Motor neuron (in vitro differentiated cells): ENCODE measurements at regions of chrX and their contacts with region 1.

Region 1: DNA sequence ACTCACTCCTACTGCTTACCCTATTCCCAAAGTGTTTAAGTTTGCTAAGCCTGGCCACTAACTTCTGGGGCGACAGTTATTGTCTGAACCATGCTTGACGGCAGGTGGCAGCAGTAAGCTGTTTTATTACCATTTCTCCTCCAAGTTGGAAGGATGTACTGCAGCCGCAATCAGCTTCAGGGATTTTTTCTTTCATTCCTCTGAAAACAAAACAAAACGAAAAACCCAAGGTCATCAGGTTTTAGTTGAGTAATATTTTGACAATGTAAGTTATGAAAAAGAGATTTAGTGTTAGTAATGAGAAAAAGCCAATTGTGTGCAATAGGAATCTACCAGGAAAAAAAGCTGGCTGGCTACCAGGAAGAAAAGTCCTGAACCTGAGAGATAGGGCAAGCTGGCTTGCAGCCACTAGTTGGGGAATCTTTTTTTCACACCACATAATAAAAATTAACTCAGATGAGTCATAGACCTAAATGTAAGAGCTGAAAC is 13.2 kb upstream of the RAB9B start:
- ATAC-seq: peak; percentile 52 to 84 (median 78)
- H3K4me3 ChIP-seq: peak overlapping the region in 2 of 5 donors; percentile 15 to 24
- H3K27ac ChIP-seq: no peak overlapping the region
- H3K4me1 ChIP-seq: peaks cover 0 to 2% of the 10 kb centered on the region in 2 donors

Region 2: DNA sequence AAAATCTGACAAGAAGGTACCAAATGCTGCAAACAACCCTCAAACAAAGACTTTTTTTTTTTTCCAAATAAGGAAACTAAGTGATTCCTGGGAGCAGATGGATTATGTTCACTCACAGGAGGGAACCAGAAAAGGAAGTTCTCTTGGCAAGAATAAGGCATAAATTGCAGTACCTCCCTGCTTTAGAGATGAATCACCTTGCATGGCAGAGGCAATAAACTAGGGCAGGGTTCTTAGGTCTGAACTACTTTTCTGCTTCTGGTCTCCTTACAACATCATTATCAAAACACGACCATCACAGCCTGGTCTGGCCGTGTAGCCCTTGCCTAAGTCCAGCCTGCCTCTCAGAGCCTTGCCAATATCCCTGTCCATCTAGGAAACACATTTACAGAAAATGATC is 128.2 kb before region 1 on chrX:
- in situ Hi-C with region 1: no loop called
- ATAC-seq: peak in 2 of 8 experiments; percentile 83 to 98
- H3K4me3 ChIP-seq: no peak overlapping the region
- H3K27ac ChIP-seq: no peak overlapping the region
- H3K4me1 ChIP-seq: no peaks in the 10 kb centered on the region

Region 3: GRCh38 chrX:103941201-103941975 is 96.2 kb after region 1 on chrX:
- in situ Hi-C with region 1: loop called in 1 of 9 experiments (anchors 25 kb)
- ATAC-seq: peak in 3 of 8 experiments; percentile 13 to 30 (median 21)
- H3K4me3 ChIP-seq: no peak overlapping the region
- H3K27ac ChIP-seq: no peak overlapping the region
- H3K4me1 ChIP-seq: no peaks in the 10 kb centered on the region

Region 4: GRCh38 chrX:104113222-104113965 is 268.2 kb after region 1 on chrX:
- in situ Hi-C with region 1: loop called in 1 of 9 experiments (anchors 25 kb)
- ATAC-seq: peak; percentile 47 to 70 (median 62)
- H3K4me3 ChIP-seq: peak overlapping the region; percentile 46 to 74 (median 50)
- H3K27ac ChIP-seq: peak overlapping the region in 1 of 2 donors; percentile 87
- H3K4me1 ChIP-seq: peaks cover 7 to 10% of the 10 kb centered on the region in 2 donors

Region 5: GRCh38 chrX:104136241-104137019 is 291.2 kb after region 1 on chrX:
- in situ Hi-C with region 1: loop called in 2 of 9 experiments (anchors 25 kb)
- ATAC-seq: peak; percentile 91 to 99 (median 98)
- H3K4me3 ChIP-seq: peak overlapping the region; percentile 22 to 46 (median 33)
- H3K27ac ChIP-seq: peak overlapping the region in 1 of 2 donors; percentile 58
- H3K4me1 ChIP-seq: no peaks in the 10 kb centered on the region